Activated CD4-positive, alpha-beta T cell treated with anti-CD3 and anti-CD28 coated beads, Interleukin-2, amount 10 ng/mL, durations not matched to agents 24 days and 14 days (primary cell): ENCODE measurements at regions of chr2 and their contacts with region 1.

Region 1: DNA sequence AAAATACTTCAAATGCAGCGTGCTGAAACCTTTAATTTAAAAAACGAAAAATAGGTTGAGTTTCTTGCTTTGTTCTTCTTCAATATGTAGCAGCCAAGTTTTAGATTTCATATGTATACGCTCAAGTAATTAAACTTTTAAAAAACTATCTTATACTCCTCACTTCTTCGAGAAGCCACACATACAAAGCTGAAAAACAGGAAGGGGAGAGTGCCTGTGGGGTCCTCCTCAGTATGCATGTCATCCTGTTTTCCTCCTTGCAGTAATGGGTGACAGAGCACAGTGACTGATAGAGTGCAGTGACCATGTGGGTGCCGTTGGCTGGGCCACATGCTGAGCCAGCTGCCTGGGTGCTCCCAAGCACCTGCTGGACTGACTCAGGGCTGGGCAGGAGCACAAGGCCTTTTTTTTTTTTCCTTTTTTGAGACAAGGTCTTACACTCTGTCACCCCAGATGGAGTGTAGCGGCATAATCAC is 33.3 kb downstream of the UXS1 start:
- DNase-seq: peak; percentile 80
- H3K4me3 Mint-ChIP-seq: peak overlapping the region; percentile 82
- H3K27ac Mint-ChIP-seq: peak overlapping the region; percentile 90
- H3K4me1 Mint-ChIP-seq: peaks cover 57% of the 10 kb centered on the region
- H3K27me3 Mint-ChIP-seq: no peaks in the 10 kb centered on the region

Region 2: GRCh38 chr2:105143467-105144151 is 1017.2 kb before region 1 on chr2:
- intact Hi-C with region 1: no loop called
- DNase-seq: peak; percentile 86
- H3K4me3 Mint-ChIP-seq: peak overlapping the region; percentile 81
- H3K27ac Mint-ChIP-seq: peak overlapping the region; percentile 52
- H3K4me1 Mint-ChIP-seq: peaks cover 13% of the 10 kb centered on the region
- H3K27me3 Mint-ChIP-seq: peaks cover 23% of the 10 kb centered on the region

Region 3: DNA sequence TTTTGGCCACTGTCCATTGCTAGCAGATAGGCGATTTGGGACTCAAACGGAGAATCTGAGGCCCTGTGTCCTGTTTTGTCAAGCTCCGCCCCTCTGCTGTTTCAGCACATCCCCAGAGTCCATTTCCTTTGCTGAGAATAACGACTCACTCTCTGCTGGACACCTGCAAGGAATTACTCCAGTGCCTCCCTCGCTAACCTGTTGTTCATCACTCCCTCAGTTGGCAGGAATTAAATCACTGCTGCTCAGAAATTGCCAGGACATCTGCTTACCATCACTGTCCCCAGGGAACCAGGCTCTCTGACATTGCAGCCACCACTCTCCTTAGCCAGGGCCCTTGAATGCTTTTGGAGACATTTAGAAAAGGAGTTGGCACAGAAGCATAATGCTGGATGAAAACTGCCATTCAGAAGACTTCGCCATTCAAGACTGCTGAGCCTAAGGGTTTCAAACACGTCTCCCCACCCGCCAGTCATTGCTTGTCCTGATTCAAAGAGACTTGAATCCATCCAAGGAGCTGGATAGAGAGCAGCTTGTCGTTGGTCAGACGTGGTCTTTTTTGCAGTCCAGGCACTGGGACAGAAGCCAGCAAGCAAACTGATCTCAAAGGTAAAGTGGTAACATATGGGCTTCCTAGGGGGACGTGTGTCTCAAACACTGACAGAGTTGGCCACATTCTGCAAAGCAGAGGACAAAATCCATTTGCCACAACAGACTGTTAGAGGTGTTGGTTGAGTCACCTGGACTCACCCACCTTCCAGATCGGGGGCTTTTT is 122.0 kb before region 1 on chr2:
- intact Hi-C with region 1: no loop called
- DNase-seq: no peak
- H3K4me3 Mint-ChIP-seq: no peak overlapping the region
- H3K27ac Mint-ChIP-seq: no peak overlapping the region
- H3K4me1 Mint-ChIP-seq: no peaks in the 10 kb centered on the region
- H3K27me3 Mint-ChIP-seq: peaks cover 11% of the 10 kb centered on the region

Region 4: DNA sequence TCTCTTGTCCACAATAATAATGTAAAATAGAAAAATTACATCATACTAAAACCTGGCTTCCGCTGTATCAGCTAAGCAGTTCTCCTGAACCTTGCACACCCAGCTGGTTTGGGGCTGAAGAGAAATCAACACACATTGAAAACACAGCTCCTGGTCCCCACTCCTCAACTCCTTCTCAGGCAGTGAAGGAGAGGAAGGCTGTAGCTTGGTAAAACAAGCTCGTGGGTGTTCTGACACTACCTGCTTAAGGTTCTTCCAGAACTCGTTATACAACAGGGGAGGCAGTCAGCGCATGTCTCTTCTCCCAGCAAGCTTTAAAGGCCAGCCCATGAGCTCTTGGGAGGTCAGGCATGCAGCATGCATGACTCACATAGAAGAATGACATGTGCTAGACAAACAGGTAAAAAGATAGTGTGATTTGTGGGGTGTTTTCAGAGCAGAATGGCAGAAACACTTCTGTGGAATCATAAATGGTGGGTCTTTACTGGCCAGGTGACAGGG is 35.9 kb before region 1 on chr2:
- intact Hi-C with region 1: loop called (anchors 5 kb)
- DNase-seq: no peak
- H3K4me3 Mint-ChIP-seq: no peak overlapping the region
- H3K27ac Mint-ChIP-seq: no peak overlapping the region
- H3K4me1 Mint-ChIP-seq: peaks cover 24% of the 10 kb centered on the region
- H3K27me3 Mint-ChIP-seq: no peaks in the 10 kb centered on the region

Region 5: GRCh38 chr2:106140913-106141312 is 19.9 kb before region 1 on chr2:
- intact Hi-C with region 1: loop called (anchors 1 kb)
- DNase-seq: no peak
- H3K4me3 Mint-ChIP-seq: peak overlapping the region; percentile 22
- H3K27ac Mint-ChIP-seq: peak overlapping the region; percentile 83
- H3K4me1 Mint-ChIP-seq: peaks cover 55% of the 10 kb centered on the region
- H3K27me3 Mint-ChIP-seq: no peaks in the 10 kb centered on the region